Cardiac septum (tissue), 1 donor: ENCODE measurements at regions of chr11 and their contacts with region 1.

Region 1: DNA sequence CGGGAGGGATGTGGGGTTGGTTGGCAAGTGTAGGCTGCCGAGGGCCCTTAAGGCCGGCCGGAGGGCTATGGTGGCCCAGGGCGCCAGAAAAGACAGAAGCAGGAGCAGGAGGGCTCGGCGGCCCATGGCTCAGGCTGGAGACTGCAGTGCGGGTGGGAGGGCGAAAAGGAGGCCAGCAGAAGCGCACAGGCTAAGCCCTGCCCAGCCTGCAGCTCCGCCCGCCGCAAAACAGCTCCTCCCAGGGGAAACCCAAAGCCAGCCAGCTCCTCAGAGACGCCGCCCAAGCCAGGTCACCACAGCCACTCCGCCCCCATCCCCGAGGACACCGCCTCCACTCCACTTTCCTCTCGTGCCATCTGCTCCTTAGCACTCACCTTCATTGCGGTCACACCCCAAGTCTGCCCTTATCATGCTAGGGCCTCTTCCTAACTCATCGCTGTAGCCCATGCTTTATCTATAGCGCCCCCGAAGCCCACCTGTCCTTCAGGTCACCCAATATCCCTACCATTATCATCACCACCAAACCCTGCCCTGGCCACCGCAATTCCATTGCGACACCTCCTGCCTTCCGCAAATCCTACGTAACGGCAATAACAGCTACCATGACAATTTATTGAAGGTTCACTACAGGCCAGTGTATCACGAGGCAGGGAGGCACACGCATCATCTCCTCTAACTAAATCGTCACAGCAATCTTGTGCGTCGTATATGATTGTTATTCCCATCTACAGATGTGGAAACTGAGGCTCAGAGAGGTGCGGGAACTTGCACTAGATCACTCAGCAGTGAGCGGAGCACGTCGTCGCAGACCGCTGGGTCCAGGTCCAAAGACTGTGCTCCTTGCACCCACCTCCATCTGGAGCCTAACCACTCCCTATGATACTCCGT is at the start of gene PRCP:
- DNase-seq: peak; percentile 98
- total RNA-seq, gene PRCP: 52.3 TPM

Region 2: DNA sequence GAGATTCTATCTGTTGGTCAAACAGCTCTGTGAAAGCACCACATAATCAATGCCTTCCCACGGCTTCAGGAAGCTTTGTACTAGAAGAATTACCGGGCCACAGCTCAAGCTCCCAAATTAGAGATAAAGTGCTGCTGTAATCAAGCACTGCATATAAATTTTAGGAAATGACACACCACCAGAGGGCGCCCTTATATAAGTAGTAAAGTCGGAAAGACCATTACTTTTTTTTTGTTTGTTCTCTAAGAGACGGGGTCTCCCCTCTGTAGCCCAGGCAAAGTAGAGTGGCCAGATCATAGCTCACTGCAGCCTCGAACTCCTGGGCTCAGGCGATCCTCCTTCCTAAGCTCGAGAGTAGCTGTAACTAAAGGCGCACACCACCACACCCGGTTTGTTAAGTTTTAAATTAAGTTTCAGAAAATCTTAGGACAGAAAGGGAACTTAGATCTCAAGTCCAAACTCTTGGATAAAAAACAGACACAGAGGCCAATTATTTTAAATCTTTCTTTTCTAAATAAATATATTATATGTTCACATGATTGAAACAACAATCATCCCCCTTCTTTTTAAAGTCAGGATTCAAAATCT is 32.9 kb before region 1 on chr11:
- intact Hi-C with region 1: loop called (anchors 2 kb)
- DNase-seq: no peak

Region 3: DNA sequence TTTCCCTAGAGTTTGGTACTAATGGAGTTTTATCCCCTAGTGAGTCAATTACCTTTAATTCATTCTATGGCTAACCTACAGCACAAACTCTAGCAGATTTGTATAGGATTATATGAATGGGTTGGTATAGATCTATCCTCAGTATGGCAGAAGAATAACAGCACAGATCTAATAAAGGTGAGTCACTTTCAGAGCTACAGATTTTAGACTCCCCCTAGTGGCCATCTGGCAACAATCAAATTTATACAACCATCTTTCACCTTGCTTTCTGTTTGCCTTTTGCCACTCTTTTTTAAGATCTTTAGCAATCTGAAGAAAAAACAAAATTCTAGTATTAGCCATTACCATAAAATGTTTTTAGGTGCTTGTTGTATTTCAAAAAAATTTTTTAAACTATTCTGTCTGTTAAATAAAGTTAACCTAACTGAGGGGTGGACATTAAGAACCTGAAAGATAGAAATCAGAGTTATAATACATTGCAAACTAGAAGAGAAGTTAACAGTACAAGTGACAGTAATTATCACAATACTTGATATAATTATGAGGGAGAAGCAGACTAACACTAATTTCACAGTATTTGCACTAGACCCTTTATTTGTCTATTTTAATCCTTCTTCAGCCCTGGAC is 26.8 kb after region 1 on chr11:
- intact Hi-C with region 1: no loop called
- DNase-seq: no peak

Region 4: DNA sequence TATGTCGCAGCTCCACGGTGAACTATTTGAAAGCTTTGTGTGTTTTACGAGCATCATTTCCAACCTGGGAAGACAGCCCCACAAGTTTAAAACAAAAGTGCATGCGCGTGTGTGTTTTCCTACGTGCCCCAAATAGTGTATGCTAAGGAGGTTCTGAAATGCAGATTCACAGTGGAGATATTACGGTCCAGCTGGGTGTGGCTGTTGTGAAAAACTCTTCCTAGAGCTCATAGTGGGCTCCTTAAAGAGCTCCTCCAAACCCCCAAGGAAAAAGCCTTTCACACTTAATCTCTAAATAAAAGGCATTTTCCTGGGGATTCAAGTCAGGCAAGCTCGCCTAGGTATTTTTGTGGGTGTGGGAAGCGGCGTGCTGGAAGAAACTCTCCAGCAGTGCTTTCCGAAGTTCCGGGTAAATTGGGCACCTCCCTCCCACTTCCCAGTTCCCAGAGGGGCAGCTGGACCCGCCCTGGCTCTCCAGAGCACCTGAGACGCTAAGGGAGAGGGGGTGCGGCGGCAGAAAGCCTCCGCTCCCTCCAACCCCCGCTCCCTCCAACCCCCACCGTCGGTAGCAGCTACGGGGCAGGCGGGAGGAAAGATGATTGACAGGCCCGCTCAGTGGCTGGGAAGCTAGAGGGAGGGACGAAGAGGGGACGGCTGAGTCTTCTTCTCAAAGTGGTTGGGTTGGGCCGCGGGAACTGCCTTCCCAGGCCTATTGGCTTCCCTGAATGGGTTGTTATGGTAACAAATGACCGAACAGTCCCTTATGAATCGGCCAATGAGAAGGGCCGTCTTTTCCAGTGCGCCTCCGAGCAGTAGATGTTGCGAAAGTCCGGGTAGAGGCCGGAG is 255.9 kb after region 1 on chr11:
- intact Hi-C with region 1: loop called (anchors 2 kb)
- DNase-seq: peak; percentile 99

Region 5: DNA sequence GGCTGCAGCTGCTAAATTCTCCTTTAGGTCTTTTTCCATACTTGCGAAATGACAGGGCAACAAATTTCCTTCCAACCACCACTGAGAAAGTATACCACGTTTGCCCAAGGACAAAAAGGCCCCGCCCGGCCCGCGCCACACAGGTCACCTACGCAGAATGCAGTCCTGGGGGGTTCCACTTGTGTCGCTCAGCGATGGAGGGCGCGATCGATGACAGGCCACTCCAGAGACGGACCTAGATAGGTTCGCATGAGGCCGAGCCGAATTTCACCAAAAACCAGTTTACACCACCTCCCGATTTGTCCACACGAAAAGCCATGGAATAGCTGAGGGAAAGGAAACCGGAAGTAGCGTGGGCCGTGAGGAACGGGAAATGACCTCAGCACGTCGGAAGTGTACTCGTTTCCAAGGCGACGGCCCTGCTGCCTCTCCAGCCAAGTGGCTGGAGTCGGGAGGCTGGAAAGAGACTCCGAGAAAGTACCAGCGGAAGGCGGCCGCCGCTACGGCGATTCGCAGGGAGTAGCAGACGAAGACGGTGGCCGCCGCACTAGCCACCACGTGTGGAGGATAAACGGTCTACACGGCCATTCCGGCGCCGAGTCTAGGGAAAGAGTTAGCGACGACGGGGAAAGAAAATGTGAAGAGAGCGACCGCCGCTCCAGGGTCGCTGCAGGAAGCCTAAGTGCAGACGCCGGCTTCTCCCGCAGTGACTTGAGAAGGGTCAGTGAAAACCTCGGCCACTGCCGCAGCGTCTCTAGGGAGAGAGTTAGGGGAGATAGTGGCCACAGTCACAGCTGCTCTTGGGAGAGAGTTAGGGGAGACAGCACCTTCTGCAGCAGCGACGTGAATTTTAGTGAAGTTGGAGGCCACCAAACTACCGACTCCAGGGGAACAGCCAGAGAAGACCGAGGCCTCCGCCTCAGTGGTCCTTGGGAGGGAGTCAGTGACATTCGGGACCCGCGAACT is 293.1 kb after region 1 on chr11 and contains the start of gene ANKRD42:
- intact Hi-C with region 1: loop called (anchors 5 kb)
- DNase-seq: peak; percentile 96
- total RNA-seq, gene ANKRD42: 6.0 TPM

Region 6: GRCh38 chr11:83285771-83286528 is 385.4 kb after region 1 on chr11 and contains the start of gene CCDC90B:
- intact Hi-C with region 1: loop called (anchors 2 kb)
- DNase-seq: peak; percentile 98
- total RNA-seq, gene CCDC90B: 29.5 TPM